ENCODE measurements at regions of chr4 and their contacts with region 1.

Region 1: GRCh38 chr4:182925298-182925738 is 8.1 kb upstream of the DCTD start:
- DNase-seq: no peak
- H3K4me3 ChIP-seq: no peak overlapping the region
- H3K27ac ChIP-seq: no peak overlapping the region
- H3K4me1 ChIP-seq: peaks cover 0 to 33% (median 14%) of the 10 kb centered on the region in 4 donors
- H3K27me3 ChIP-seq: no peaks in the 10 kb centered on the region
- CTCF ChIP-seq: peak in 3 of 4 experiments; percentile 17 to 25 (median 24)
- EP300 ChIP-seq: no peak
- POLR2A ChIP-seq: no peak

Region 2: DNA sequence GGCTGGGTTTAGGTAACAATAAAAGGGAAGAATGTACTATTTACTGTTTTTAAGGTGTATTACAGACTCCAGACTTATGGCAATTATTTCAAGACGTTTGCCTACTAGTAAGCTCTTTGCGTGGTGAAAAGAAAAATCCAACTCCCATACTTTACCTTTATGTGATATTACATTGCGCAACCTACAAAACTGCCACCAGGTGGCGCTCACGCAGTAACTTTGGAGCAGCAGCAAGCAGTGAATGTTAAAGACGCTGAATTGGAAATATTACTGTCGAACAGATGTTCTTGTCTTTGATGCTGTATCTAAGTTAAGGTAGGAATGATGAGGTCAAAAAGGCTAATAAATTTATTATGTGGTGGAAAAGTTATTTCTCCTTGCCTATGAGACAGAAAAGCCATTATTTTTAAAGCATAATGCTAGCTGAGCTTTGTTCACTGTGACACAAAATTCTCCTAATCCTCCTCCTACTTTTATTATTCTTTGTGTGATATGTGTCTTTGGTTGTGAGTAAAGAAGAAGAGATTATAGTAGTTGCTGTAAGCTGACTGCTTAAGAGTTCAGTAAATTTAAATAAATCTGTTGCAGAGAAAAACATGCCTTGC is 1782.0 kb before region 1 on chr4:
- intact Hi-C with region 1: loop called (anchors 10 kb)
- DNase-seq: peak; percentile 85
- H3K4me3 ChIP-seq: no peak overlapping the region
- H3K27ac ChIP-seq: no peak overlapping the region
- H3K4me1 ChIP-seq: no peaks in the 10 kb centered on the region
- H3K27me3 ChIP-seq: peaks cover 0 to 7% (median 0%) of the 10 kb centered on the region in 3 donors
- CTCF ChIP-seq: peak; percentile 55 to 84 (median 58)
- EP300 ChIP-seq: no peak
- POLR2A ChIP-seq: no peak

Region 3: DNA sequence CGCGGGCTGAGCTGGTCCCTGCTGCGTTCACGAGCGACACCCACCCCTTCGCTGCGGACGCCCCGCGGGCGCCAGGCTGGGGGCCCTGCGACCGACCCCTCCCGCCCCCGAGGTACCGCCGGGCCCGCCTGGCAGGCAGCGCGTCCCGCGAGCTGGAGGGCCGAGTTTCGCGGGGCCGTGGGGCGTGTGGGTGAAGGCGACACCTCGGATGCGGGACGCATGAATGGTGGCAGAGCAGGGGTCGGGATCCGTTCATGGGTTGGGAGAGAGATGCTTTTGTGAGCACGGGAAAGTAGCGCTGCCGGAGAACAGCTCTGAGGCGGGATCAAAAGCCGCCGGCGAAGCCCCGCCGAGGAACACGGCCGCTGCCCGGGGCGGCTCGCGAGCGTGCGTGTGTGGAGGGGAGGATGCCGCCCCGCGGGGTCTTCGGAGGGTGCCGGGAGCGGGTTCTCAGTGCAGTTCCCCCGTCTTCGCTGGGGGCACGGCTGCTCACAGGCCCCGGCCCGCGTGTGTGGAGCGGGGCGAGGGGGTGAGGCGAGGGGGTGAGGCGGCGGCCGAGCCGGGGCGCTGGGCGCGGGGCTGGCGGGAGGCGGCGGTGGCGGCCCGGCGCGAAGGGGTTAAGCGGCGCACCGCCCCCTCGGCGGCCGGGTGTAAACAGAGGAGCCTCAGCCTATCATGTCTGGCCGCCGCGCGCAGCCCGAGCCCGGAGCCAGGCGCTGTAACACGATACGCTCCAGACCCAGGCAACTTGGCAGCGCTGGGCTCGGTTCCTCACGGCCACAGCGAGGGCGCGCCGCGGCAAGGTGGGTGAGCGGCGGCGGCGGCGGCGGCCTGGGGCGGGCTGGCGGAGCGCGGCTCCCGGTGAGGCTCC is 476.8 kb before region 1 on chr4:
- intact Hi-C with region 1: loop called (anchors 10 kb)
- DNase-seq: peak; percentile 98
- H3K4me3 ChIP-seq: peak overlapping the region; percentile 65 to 88 (median 76)
- H3K27ac ChIP-seq: peak overlapping the region; percentile 78 to 92 (median 88)
- H3K4me1 ChIP-seq: peaks cover 0 to 36% (median 21%) of the 10 kb centered on the region in 4 donors
- H3K27me3 ChIP-seq: peaks cover 0 to 13% (median 0%) of the 10 kb centered on the region in 3 donors
- CTCF ChIP-seq: no peak
- EP300 ChIP-seq: peak in 1 of 4 donors; percentile 14
- POLR2A ChIP-seq: no peak

Region 4: DNA sequence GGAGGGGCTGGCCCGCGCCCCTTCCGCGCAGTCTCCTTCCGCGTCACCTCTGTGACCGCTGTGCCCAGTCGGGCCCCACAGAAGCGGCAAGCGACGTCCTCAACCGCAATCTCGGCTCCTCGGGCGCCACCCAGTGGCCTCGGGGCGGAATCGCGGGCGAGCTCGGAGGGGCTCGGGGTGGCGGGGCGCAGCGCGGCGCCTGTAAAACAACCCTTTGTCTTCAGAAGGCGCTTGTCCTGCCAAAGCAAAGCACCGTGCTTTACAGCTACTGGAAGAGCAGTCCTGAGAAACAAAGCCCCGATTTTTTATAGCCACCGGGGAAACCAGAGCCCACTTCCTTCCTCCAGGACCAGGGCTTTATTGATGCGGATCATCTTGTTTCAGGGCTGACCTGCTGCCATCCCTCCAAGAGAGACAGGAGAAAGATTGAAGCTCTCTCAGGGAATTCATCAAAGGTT is 481.8 kb after region 1 on chr4:
- intact Hi-C with region 1: loop called (anchors 10 kb)
- DNase-seq: peak; percentile 84
- H3K4me3 ChIP-seq: peak overlapping the region; percentile 36 to 52 (median 45)
- H3K27ac ChIP-seq: peak overlapping the region; percentile 51 to 60 (median 55)
- H3K4me1 ChIP-seq: peaks cover 0 to 8% (median 0%) of the 10 kb centered on the region in 4 donors
- H3K27me3 ChIP-seq: no peaks in the 10 kb centered on the region
- CTCF ChIP-seq: peak; percentile 66 to 97 (median 84)
- EP300 ChIP-seq: no peak
- POLR2A ChIP-seq: no peak

Region 5: DNA sequence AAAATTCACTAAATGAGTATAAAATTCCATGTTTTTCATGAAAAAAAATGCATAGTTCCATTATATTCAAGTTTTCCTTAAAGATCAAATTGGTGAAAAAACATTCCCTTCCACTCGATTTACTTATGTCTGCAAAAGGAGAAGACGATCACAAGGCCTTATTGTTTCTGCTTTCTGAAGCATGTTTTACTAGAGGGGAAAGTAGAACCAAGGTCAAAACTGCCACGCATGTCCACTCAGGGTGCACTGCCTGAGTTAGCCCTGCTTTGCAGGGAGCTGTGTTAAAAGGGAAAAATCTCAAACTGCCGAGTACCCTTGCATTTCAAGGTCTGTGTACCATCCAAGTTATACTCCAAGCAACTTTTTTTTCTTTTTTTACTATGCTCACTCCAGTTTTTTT is 791.0 kb after region 1 on chr4:
- intact Hi-C with region 1: no loop called
- DNase-seq: no peak
- H3K4me3 ChIP-seq: no peak overlapping the region
- H3K27ac ChIP-seq: no peak overlapping the region
- H3K4me1 ChIP-seq: no peaks in the 10 kb centered on the region
- H3K27me3 ChIP-seq: no peaks in the 10 kb centered on the region
- CTCF ChIP-seq: no peak
- EP300 ChIP-seq: no peak
- POLR2A ChIP-seq: no peak

Measured in sigmoid colon (tissue), 7 donors.